ENCODE measurements at regions of chr7 and their contacts with region 1.

Region 1: DNA sequence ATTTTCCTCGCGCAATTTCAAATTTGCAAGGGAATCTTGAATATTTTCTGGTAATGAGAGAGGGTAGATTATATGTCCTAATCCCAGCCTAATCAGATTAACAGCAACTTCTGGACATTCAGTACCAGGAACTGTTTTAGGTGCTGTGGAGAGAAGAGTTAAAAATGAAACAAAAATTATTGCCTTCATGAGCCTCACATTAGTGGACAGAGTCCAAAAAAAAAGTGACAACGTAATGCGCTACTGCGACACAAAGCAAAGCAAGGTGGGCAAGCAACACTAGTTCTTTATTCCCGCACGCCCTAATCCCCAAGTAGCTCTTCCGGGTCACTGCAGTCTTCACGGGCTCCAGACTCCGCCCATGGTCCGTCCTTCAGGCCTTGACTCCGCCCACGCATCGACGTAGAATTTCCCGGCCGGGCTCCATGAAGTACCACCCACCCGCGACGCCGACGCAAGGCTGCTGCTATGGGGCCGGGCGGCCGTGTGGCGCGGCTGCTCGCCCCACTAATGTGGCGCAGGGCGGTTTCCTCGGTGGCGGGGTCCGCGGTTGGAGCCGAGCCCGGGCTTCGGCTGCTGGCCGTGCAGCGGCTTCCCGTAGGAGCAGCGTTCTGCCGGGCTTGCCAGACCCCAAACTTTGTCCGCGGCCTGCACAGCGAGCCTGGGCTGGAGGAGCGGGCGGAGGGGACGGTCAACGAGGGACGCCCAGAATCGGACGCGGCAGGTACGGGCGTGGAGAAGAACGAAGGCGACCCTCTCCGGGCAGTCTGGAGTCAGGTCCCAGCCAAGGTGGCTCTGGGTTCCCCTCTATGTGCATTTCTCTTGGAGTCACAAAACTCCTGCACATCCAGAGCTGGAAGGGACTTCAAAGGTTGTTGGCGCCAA is at the start of gene MALSU1:
- DNase-seq: peak; percentile 98
- ATAC-seq: peak; percentile 100
- H3K4me3 ChIP-seq: peak within 1 kb of the TSS; percentile 70 to 95 (median 86)
- H3K4me3 Mint-ChIP-seq: peak within 1 kb of the TSS; percentile 87
- H3K27ac ChIP-seq: peak within 1 kb of the TSS; percentile 73 to 86
- H3K27ac Mint-ChIP-seq: peak within 1 kb of the TSS; percentile 94
- H3K4me1 ChIP-seq: peaks cover 16 to 23% of the 10 kb centered on the region in 2 donors
- H3K4me1 Mint-ChIP-seq: peaks cover 39% of the 10 kb centered on the region
- H3K27me3 ChIP-seq: peaks cover 0 to 6% (median 0%) of the 10 kb centered on the region in 4 experiments
- H3K27me3 Mint-ChIP-seq: no peaks in the 10 kb centered on the region
- CTCF ChIP-seq: no peak
- total RNA-seq, gene MALSU1: 38.0 and 40.8 TPM in 2 replicates

Region 2: GRCh38 chr7:21806388-21806787 is 1492.7 kb before region 1 on chr7:
- CTCF ChIA-PET with region 1: no interaction called
- POLR2A ChIA-PET with region 1: no interaction called
- intact Hi-C with region 1: no loop called
- DNase-seq: no peak
- ATAC-seq: no peak
- H3K4me3 ChIP-seq: no peak overlapping the region
- H3K4me3 Mint-ChIP-seq: no peak overlapping the region
- H3K27ac ChIP-seq: no peak overlapping the region
- H3K27ac Mint-ChIP-seq: no peak overlapping the region
- H3K4me1 ChIP-seq: no peaks in the 10 kb centered on the region
- H3K4me1 Mint-ChIP-seq: no peaks in the 10 kb centered on the region
- H3K27me3 ChIP-seq: peaks cover 0 to 5% (median 0%) of the 10 kb centered on the region in 4 experiments
- H3K27me3 Mint-ChIP-seq: peaks cover 8% of the 10 kb centered on the region
- CTCF ChIP-seq: no peak

Region 3: DNA sequence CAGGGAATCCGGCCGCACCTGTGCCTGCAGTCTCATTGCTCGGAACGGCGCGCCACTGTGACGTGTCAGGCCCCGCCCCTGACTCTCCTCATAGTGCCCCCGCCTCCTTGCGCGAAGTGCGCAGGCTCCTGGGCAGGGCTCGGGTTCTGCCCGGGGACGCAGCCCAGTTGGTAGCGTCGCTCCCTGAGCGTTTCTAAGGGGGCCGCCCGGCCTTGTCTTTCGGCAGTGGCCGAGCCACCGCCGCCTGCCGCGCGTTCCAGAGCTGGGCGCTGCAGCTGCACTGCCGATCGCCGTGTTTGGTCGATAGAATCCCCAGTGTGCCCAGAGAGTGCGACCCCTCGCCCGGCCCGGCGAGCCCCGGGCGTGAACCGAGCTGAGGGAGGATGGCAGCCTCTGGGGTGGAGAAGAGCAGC is 193.5 kb before region 1 on chr7 and contains the start of gene KLHL7:
- CTCF ChIA-PET with region 1: no interaction called
- POLR2A ChIA-PET with region 1: no interaction called
- intact Hi-C with region 1: loop called (anchors 1 kb)
- DNase-seq: peak; percentile 96
- ATAC-seq: peak; percentile 96
- H3K4me3 ChIP-seq: peak within 1 kb of the TSS; percentile 86 to 99 (median 94)
- H3K4me3 Mint-ChIP-seq: peak within 1 kb of the TSS; percentile 99
- H3K27ac ChIP-seq: peak within 1 kb of the TSS; percentile 88 to 95
- H3K27ac Mint-ChIP-seq: peak within 1 kb of the TSS; percentile 97
- H3K4me1 ChIP-seq: peaks cover 15 to 16% of the 10 kb centered on the region in 2 donors
- H3K4me1 Mint-ChIP-seq: peaks cover 32% of the 10 kb centered on the region
- H3K27me3 ChIP-seq: no peaks in the 10 kb centered on the region
- H3K27me3 Mint-ChIP-seq: no peaks in the 10 kb centered on the region
- CTCF ChIP-seq: no peak
- total RNA-seq, gene KLHL7: 22.8 and 29.5 TPM in 2 replicates

Region 4: GRCh38 chr7:23273141-23273599 is 26.0 kb before region 1 on chr7:
- CTCF ChIA-PET with region 1: interaction called, 27 read pairs
- POLR2A ChIA-PET with region 1: no interaction called
- intact Hi-C with region 1: loop called (anchors 1 kb)
- DNase-seq: peak; percentile 88
- ATAC-seq: peak; percentile 96
- H3K4me3 ChIP-seq: peak overlapping the region in 2 of 5 experiments; percentile 9 to 27
- H3K4me3 Mint-ChIP-seq: peak overlapping the region; percentile 72
- H3K27ac ChIP-seq: no peak overlapping the region
- H3K27ac Mint-ChIP-seq: peak overlapping the region; percentile 39
- H3K4me1 ChIP-seq: peaks cover 3 to 9% of the 10 kb centered on the region in 2 donors
- H3K4me1 Mint-ChIP-seq: peaks cover 4% of the 10 kb centered on the region
- H3K27me3 ChIP-seq: peaks cover 0 to 6% (median 0%) of the 10 kb centered on the region in 4 experiments
- H3K27me3 Mint-ChIP-seq: peaks cover 9% of the 10 kb centered on the region
- CTCF ChIP-seq: peak; percentile 90

Region 5: DNA sequence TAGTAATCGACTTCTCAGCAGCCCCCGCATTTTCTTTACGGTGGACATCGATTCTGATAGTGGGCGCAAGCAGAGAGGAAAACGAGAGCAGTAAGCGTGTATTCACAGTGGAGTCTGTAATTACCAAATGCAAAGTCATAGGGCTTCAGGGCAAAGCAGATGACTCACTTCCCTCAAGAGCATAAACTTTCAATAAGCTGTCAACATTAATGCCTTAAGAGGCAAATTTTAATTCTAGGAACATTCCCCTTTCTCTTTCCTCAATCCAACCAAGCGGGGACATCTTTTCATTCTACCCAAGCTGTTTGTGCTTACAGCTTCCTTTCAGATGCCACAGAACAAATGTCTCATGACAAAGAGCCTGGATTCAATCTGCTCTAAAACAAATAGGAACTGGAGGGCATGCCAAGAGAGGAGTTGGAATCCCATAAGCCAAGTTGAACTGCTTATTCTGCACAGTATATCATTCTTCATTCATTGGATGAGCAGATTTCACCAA is 48.6 kb after region 1 on chr7:
- CTCF ChIA-PET with region 1: no interaction called
- POLR2A ChIA-PET with region 1: interaction called, 5 read pairs
- intact Hi-C with region 1: loop called (anchors 1 kb)
- DNase-seq: no peak
- ATAC-seq: no peak
- H3K4me3 ChIP-seq: no peak overlapping the region
- H3K4me3 Mint-ChIP-seq: peak overlapping the region; percentile 72
- H3K27ac ChIP-seq: no peak overlapping the region
- H3K27ac Mint-ChIP-seq: peak overlapping the region; percentile 75
- H3K4me1 ChIP-seq: peaks cover 15 to 19% of the 10 kb centered on the region in 2 donors
- H3K4me1 Mint-ChIP-seq: peaks cover 30% of the 10 kb centered on the region
- H3K27me3 ChIP-seq: no peaks in the 10 kb centered on the region
- H3K27me3 Mint-ChIP-seq: no peaks in the 10 kb centered on the region
- CTCF ChIP-seq: no peak

Region 6: DNA sequence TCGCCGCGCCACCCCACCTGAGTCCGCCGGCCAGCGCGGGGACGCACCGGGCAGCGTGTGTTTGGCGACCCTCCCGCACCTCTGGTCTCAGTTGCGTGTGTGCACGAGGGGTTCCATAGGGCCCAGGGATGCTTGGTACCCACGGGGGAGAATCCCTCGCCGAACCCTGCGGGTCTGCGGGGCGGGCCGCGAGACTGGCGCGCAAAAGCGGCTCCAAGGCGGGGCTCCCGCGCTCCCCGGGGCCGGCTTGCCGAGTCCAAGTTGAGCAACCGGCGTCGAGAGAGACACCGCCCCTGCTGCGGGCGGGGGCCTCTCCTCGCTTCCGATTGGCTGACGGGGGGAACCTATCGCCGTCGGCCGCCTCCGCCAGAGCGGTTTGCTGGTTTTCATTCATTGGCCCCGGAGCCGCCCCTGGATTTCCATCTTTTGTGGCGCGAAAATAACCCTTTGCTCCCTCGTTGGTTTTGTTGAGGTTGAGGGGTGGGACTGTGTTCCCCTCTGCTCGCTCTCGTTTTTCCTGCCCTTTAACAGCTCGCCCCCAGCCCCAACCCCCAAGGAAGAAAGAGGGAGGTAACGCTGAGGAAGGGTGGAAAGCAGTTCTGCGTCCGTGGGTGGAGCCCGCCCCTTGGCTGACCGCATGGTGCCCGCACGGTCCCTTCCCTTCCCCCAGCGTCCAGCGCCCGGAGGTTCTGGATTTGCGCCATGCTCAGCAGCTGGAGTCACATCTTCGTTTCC is 175.1 kb after region 1 on chr7:
- CTCF ChIA-PET with region 1: no interaction called
- POLR2A ChIA-PET with region 1: interaction called, 3 read pairs
- intact Hi-C with region 1: loop called (anchors 5 kb)
- DNase-seq: peak; percentile 80
- ATAC-seq: peak; percentile 60
- H3K4me3 ChIP-seq: peak overlapping the region; percentile 1 to 81 (median 36)
- H3K4me3 Mint-ChIP-seq: peak overlapping the region; percentile 81
- H3K27ac ChIP-seq: no peak overlapping the region
- H3K27ac Mint-ChIP-seq: peak overlapping the region; percentile 71
- H3K4me1 ChIP-seq: peaks cover 41 to 51% of the 10 kb centered on the region in 2 donors
- H3K4me1 Mint-ChIP-seq: peaks cover 30% of the 10 kb centered on the region
- H3K27me3 ChIP-seq: peaks cover 0 to 83% (median 71%) of the 10 kb centered on the region in 4 experiments
- H3K27me3 Mint-ChIP-seq: peaks cover 61% of the 10 kb centered on the region
- CTCF ChIP-seq: no peak

Region 7: DNA sequence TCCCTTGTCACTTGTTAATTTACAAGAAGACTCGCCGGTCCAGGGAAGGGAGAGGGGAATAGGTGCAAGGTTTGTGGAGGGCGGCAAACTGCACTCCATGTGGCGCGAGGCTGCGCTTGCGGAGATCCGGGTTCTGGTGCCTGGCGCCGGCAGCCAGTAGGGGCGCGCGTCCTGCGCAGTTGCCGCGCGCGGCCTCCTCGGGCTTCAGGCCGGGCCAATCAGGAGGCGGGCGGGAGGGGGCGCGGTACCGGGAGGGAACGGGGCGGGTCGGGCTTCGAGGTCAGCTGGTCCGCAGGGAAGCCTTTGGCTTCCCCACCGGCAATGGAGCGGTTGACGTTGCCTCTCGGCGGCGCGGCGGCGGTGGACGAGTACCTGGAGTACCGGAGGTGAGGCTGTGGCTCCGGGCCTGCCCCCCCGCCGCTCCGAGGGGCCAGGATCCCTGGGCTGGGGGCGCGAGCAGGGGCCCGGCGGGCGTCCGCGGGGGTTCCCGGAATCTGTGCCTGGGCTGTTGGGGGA is 380.8 kb after region 1 on chr7 and contains the start of gene FAM221A:
- CTCF ChIA-PET with region 1: no interaction called
- POLR2A ChIA-PET with region 1: no interaction called
- intact Hi-C with region 1: loop called (anchors 1 kb)
- DNase-seq: peak; percentile 89
- ATAC-seq: peak; percentile 99
- H3K4me3 ChIP-seq: peak within 1 kb of the TSS; percentile 51 to 85 (median 75)
- H3K4me3 Mint-ChIP-seq: peak within 1 kb of the TSS; percentile 90
- H3K27ac ChIP-seq: peak within 1 kb of the TSS in 1 of 2 donors; percentile 57
- H3K27ac Mint-ChIP-seq: peak within 1 kb of the TSS; percentile 81
- H3K4me1 ChIP-seq: peaks cover 0 to 15% of the 10 kb centered on the region in 2 donors
- H3K4me1 Mint-ChIP-seq: peaks cover 9% of the 10 kb centered on the region
- H3K27me3 ChIP-seq: no peaks in the 10 kb centered on the region
- H3K27me3 Mint-ChIP-seq: no peaks in the 10 kb centered on the region
- CTCF ChIP-seq: peak; percentile 80
- total RNA-seq, gene FAM221A: 10.7 and 10.8 TPM in 2 replicates